ENCODE measurements at regions of chr4 and their contacts with region 1.

Region 1: DNA sequence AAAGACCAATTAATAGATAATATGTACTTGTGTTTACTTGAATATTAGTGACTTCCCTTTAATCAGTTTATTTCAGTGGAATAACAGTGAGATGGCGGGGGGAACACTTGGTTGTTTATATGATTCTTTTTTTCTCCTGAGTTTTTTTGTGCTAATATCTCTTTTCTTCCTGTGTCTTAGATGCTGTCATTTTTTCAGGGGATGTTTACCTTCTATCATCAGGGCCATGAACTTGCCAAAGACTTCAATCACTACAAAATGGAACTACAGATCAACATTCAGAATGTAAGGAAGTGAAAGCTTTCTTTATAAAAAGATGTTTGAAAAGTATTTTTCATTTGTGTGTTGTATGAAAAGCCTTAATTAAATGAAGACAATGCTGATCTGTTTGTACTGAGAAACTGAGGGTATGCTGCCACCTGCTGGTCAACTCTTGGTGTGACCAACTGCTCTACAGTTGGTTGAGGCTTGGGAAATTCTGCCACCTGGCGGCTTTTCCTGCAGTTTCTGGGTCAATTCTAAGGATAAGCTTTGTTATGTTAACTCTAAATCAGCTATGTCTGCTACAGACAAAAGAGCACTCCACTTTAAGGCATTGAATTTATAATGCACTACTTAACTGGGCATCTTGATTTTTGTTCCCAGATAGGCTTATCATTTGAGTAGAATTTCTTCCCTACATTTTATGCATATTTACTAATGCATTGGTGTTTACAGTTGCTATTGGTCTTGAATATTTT is 134.8 kb downstream of the ARHGAP10 start:
- DNase-seq: peak; percentile 85
- H3K4me3 ChIP-seq: no peak overlapping the region
- H3K27ac ChIP-seq: no peak overlapping the region
- H3K27me3 ChIP-seq: no peaks in the 10 kb centered on the region
- CTCF ChIP-seq: peak; percentile 99

Region 2: GRCh38 chr4:147019061-147019460 is 847.6 kb before region 1 on chr4:
- CTCF ChIA-PET with region 1: interaction called, 14 read pairs
- POLR2A ChIA-PET with region 1: no interaction called
- DNase-seq: peak; percentile 13
- H3K4me3 ChIP-seq: no peak overlapping the region
- H3K27ac ChIP-seq: no peak overlapping the region
- H3K27me3 ChIP-seq: no peaks in the 10 kb centered on the region
- CTCF ChIP-seq: peak; percentile 69

Region 3: DNA sequence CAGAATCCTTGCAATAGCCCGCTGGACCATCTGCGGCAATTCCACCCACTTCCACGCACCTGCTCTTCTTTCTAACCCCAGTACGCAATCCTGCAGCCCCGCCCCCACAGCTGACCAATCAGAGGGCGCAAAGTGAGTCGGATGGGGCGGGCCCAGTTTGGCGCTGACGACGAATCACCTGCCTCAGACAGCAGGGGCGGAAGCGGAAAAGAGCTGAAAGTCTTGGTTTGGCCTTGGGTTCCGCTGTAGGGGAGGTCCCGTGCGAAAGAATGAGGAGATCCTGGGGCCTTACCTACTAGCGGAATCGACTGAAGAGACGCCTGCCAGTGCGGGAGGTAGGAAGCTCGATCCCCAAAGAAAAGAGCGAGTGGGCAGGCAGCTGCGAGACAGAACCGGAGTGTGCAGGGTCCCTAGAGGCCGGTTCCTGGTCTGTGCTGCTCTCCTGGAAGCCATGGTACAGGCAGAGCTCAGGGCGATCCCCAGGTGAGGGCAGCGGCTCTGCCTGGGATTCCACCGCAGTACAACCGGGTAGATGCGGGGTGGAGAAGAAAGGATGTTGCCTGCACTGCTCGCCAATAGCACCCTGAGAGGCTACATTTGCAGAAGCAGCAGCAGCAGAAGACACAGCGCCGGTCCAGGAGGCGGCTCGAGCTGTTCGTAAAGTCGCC is 249.4 kb before region 1 on chr4 and contains the start of gene TMEM184C:
- CTCF ChIA-PET with region 1: interaction called, 70 read pairs
- POLR2A ChIA-PET with region 1: no interaction called
- DNase-seq: peak; percentile 84
- H3K4me3 ChIP-seq: peak within 1 kb of the TSS; percentile 76
- H3K27ac ChIP-seq: peak within 1 kb of the TSS; percentile 66
- H3K27me3 ChIP-seq: no peaks in the 10 kb centered on the region
- CTCF ChIP-seq: peak; percentile 24; the same call in 1 of the 2 replicates
- polyA plus RNA-seq, gene TMEM184C: 33.3 and 40.6 TPM in 2 replicates

Region 4: GRCh38 chr4:147678796-147679549 is 187.7 kb before region 1 on chr4:
- CTCF ChIA-PET with region 1: interaction called, 113 read pairs
- POLR2A ChIA-PET with region 1: interaction called, 3 read pairs
- DNase-seq: no peak
- H3K4me3 ChIP-seq: no peak overlapping the region
- H3K27ac ChIP-seq: no peak overlapping the region
- H3K27me3 ChIP-seq: no peaks in the 10 kb centered on the region
- CTCF ChIP-seq: no peak

Region 5: GRCh38 chr4:147723326-147723725 is 143.4 kb before region 1 on chr4:
- CTCF ChIA-PET with region 1: interaction called, 31 read pairs
- POLR2A ChIA-PET with region 1: no interaction called
- DNase-seq: no peak
- H3K4me3 ChIP-seq: no peak overlapping the region
- H3K27ac ChIP-seq: no peak overlapping the region
- H3K27me3 ChIP-seq: no peaks in the 10 kb centered on the region
- CTCF ChIP-seq: no peak

Region 6: GRCh38 chr4:147786031-147786430 is 80.7 kb before region 1 on chr4:
- CTCF ChIA-PET with region 1: interaction called, 11 read pairs
- POLR2A ChIA-PET with region 1: no interaction called
- DNase-seq: no peak
- H3K4me3 ChIP-seq: no peak overlapping the region
- H3K27ac ChIP-seq: no peak overlapping the region
- H3K27me3 ChIP-seq: no peaks in the 10 kb centered on the region
- CTCF ChIP-seq: no peak

Region 7: GRCh38 chr4:147891476-147892115 is 24.9 kb after region 1 on chr4:
- CTCF ChIA-PET with region 1: interaction called, 15 read pairs
- POLR2A ChIA-PET with region 1: no interaction called
- DNase-seq: no peak
- H3K4me3 ChIP-seq: no peak overlapping the region
- H3K27ac ChIP-seq: no peak overlapping the region
- H3K27me3 ChIP-seq: no peaks in the 10 kb centered on the region
- CTCF ChIP-seq: no peak

Measured in AG04450 (cell line).